Left cardiac atrium (tissue), 4 donors: ENCODE measurements at regions of chr15 and their contacts with region 1.

Region 1: GRCh38 chr15:63402498-63403253 is 21.0 kb upstream of the CA12 start:
- DNase-seq: no peak
- ATAC-seq: peak; percentile 50 to 59

Region 2: GRCh38 chr15:63093486-63094205 is 309.0 kb before region 1 on chr15:
- intact Hi-C with region 1: no loop called
- DNase-seq: peak; percentile 78
- ATAC-seq: peak; percentile 93

Region 3: GRCh38 chr15:63288778-63289378 is 113.8 kb before region 1 on chr15:
- intact Hi-C with region 1: loop called (anchors 2 to 5 kb)
- DNase-seq: no peak
- ATAC-seq: peak; percentile 50 to 61